Tibial artery (tissue), 4 donors: ENCODE measurements at regions of chr11 and their contacts with region 1.

Region 1: DNA sequence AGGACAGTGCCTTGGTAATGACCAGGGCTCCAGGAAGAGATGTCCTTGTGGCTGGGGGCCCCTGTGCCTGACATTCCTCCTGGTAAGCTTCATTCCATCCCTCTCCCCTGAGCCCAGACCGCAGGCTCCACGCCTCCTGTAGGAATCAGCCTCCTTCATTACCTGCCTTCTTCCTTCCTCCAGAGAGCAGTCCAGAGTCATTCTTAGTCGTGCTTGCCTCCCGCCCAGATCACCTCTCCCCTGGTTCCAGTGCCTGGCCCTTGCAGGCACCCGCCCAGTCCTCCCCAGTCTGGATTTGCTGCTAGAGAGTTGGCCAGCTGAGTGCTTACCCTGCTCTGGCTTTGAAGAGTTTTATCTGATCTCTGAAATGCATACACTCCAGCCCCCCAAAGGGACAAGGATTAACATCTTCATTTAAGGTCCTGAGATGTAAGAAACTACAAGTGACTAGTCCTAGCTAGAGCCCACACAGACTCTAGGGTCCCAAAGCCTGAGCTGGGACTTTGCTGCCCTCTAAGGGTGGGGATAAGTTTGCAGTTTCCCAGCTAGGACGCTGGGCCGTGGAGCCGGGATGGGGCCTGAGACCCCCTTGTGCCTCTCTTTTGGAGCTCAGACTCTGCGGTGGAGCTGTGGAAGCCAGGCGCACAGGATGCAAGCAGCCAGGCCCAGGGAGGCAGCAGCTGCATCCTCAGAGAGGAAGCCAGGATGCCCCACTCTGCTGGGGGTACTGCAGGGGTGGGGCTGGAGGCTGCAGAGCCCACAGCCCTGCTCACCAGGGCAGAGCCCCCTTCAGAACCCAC is 1.6 kb downstream of the NR1H3 start:
- DNase-seq: no peak
- H3K4me3 ChIP-seq: no peak overlapping the region
- H3K27ac ChIP-seq: no peak overlapping the region
- H3K4me1 ChIP-seq: peaks cover 0 to 44% (median 27%) of the 10 kb centered on the region in 4 donors
- H3K27me3 ChIP-seq: no peaks in the 10 kb centered on the region
- CTCF ChIP-seq: peak in 1 of 2 experiments; percentile 20

Region 2: GRCh38 chr11:47044112-47044511 is 215.3 kb before region 1 on chr11:
- intact Hi-C with region 1: no loop called
- DNase-seq: no peak
- H3K4me3 ChIP-seq: no peak overlapping the region
- H3K27ac ChIP-seq: no peak overlapping the region
- H3K4me1 ChIP-seq: no peaks in the 10 kb centered on the region
- H3K27me3 ChIP-seq: no peaks in the 10 kb centered on the region
- CTCF ChIP-seq: no peak

Region 3: DNA sequence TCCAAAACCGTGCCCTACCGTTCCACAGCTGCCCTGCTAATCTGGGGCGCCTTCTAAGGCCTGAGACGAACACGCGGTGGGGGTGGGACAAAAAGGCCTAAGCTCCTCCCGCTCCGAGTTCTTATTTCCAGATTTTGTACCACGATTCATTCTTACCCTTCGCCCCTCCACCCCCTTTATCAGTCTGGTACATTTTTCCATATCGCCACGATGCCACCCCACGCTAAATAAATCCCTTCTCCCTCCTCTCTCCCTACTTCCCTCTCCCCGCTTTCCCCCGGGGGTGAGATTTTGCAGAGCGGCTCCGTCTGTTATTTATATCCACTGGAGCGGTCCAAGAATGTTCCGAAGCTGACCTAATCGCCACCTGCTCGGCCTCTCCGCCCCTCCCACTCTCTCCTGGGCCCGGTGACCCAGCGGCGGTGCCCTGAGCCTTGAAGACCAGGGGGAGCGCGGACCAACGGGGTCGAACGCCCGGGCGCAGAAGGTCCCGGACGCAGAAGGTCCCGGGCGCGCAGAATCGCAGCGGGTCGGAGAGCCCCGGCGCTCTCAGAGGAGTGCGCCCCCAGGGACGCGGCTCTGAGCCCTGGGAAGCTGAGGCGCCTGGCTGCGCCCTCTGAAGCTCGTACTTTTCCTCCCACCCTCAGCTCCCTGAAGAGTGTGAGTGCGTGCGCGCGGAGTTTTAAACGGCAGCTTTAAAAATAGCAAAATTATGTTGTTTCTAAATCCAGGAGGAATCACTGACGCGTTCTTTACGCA is 72.3 kb before region 1 on chr11:
- intact Hi-C with region 1: loop called (anchors 5 kb)
- DNase-seq: peak; percentile 55 to 91
- H3K4me3 ChIP-seq: peak overlapping the region; percentile 81 to 83
- H3K27ac ChIP-seq: peak overlapping the region; percentile 95 to 97
- H3K4me1 ChIP-seq: peaks cover 0 to 54% (median 44%) of the 10 kb centered on the region in 4 donors
- H3K27me3 ChIP-seq: no peaks in the 10 kb centered on the region
- CTCF ChIP-seq: no peak

Region 4: DNA sequence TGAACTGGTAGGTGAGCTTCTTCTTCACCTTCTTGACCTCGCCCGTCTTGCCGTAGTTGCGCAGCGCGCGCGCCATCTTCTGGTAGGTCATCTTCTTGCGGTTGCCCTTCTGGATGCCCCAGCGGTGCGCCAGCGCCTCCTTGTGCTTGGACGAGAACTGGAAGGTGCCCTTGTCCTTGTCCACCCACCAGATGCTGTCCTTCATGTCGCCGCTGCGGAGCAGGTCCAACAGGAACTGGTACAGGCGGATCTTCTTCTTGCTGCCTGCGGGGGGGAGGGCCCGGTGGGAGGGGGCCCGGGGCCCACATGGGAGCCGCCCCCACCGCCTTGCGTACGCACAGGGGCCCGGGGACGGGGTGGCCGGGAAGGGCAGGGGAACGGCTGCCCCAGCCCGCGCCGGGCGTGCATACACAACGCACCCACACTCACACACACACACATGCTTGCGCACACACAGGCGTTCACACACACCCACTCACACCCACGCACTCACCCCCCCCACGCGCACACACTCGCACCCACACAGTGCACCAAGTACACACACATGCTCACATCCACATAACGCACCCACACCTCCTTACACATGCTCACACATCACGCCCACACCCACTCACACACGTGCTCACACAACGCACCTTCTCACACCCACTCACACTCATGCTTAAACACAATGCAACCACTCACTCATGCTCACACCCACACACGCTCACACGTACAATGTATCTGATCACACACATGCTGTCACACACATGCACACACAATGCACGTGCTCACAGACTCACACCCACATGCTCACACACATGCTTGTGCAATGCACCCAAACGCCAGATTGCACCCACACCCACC is 96.1 kb after region 1 on chr11:
- intact Hi-C with region 1: loop called (anchors 2 kb)
- DNase-seq: peak; percentile 89 to 94
- H3K4me3 ChIP-seq: peak overlapping the region; percentile 38 to 54
- H3K27ac ChIP-seq: peak overlapping the region in 1 of 2 donors; percentile 39
- H3K4me1 ChIP-seq: peaks cover 0 to 11% (median 4%) of the 10 kb centered on the region in 4 donors
- H3K27me3 ChIP-seq: no peaks in the 10 kb centered on the region
- CTCF ChIP-seq: peak; percentile 94 to 95